Heart left ventricle (tissue), 16 donors: ENCODE measurements at regions of chr18 and their contacts with region 1.

Region 1: GRCh38 chr18:1124495-1124894 is 219.8 kb downstream of the ADCYAP1 start:
- DNase-seq: no peak
- ATAC-seq: no peak
- H3K4me3 ChIP-seq: no peak overlapping the region
- H3K27ac ChIP-seq: no peak overlapping the region
- H3K4me1 ChIP-seq: no peaks in the 10 kb centered on the region
- H3K27me3 ChIP-seq: no peaks in the 10 kb centered on the region
- CTCF ChIP-seq: no peak
- POLR2A ChIP-seq: no peak

Region 2: GRCh38 chr18:1020731-1021344 is 103.7 kb before region 1 on chr18:
- intact Hi-C with region 1: loop called in 1 of 10 experiments (anchors 5 kb)
- DNase-seq: no peak
- ATAC-seq: no peak
- H3K4me3 ChIP-seq: no peak overlapping the region
- H3K27ac ChIP-seq: no peak overlapping the region
- H3K4me1 ChIP-seq: peaks cover 0 to 7% (median 0%) of the 10 kb centered on the region in 12 donors
- H3K27me3 ChIP-seq: no peaks in the 10 kb centered on the region
- CTCF ChIP-seq: no peak
- POLR2A ChIP-seq: no peak

Region 3: DNA sequence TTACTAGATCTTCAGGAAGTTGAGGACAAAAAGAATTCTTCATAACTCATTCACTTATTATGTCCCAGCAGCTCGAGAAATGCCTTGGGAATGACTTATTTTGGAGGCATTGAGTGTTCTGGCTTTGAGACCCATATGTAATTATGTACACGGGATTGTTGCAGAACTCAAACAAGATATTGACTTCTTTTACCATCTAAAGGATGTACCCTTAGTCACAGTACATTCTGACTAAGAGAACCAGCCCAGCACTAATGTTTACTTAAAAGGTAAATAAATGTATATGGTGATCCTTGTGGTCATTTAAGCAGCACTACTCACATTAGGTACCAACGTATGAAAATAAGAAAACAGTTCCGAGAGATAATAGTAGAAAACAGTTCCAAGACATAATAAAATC is 49.1 kb after region 1 on chr18:
- intact Hi-C with region 1: loop called in 1 of 10 experiments (anchors 10 kb)
- DNase-seq: no peak
- ATAC-seq: no peak
- H3K4me3 ChIP-seq: no peak overlapping the region
- H3K27ac ChIP-seq: no peak overlapping the region
- H3K4me1 ChIP-seq: no peaks in the 10 kb centered on the region
- H3K27me3 ChIP-seq: no peaks in the 10 kb centered on the region
- CTCF ChIP-seq: no peak
- POLR2A ChIP-seq: no peak